HAP-1 (cell line): ENCODE measurements at regions of chr19 and their contacts with region 1.

Region 1: GRCh38 chr19:33125929-33126388 is 6.0 kb upstream of the WDR88 start:
- DNase-seq: peak; percentile 52 to 66
- H3K4me3 ChIP-seq: no peak overlapping the region
- H3K4me1 ChIP-seq: peaks cover 14% of the 10 kb centered on the region
- H3K27me3 ChIP-seq: no peaks in the 10 kb centered on the region

Region 2: DNA sequence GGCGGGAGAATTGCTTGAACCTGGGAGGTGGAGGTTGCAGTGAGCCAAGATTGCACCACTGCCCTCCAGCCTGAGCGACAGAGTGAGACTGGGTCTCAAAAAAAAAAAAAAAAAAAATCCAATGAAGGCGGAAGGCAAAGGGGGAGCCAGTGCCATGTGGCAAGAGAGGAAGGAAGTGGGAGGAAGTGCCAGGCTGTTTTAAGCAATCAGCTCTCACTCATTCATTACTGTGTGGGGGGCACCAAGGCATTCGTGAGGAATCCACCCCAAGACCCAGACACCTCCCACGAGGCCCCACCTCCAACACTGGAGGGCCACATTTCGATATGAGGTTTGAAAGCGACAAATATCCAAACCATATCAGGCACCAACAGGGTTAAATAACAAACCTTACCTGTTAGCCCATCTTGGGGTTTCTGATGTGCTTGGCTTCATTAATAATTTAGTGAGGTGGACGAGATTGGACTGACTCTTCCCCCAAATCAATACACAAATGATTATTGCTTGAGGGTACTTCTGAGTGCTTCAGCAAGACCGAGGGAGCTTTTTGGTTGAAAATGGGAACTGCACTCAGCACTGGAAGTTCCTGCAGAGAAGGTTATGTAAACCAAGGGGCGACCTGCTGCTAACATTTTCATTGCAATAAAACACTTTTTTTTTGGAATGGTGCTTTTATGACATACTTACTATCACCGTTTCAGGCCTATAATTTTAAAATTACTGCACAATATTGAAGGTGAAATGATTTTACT is 60.6 kb after region 1 on chr19:
- in situ Hi-C with region 1: loop called (anchors 10 kb)
- DNase-seq: no peak
- H3K4me3 ChIP-seq: no peak overlapping the region
- H3K4me1 ChIP-seq: no peaks in the 10 kb centered on the region
- H3K27me3 ChIP-seq: no peaks in the 10 kb centered on the region